Naive thymus-derived CD8-positive, alpha-beta T cell (primary cell): ENCODE measurements at regions of chr22 and their contacts with region 1.

Region 1: DNA sequence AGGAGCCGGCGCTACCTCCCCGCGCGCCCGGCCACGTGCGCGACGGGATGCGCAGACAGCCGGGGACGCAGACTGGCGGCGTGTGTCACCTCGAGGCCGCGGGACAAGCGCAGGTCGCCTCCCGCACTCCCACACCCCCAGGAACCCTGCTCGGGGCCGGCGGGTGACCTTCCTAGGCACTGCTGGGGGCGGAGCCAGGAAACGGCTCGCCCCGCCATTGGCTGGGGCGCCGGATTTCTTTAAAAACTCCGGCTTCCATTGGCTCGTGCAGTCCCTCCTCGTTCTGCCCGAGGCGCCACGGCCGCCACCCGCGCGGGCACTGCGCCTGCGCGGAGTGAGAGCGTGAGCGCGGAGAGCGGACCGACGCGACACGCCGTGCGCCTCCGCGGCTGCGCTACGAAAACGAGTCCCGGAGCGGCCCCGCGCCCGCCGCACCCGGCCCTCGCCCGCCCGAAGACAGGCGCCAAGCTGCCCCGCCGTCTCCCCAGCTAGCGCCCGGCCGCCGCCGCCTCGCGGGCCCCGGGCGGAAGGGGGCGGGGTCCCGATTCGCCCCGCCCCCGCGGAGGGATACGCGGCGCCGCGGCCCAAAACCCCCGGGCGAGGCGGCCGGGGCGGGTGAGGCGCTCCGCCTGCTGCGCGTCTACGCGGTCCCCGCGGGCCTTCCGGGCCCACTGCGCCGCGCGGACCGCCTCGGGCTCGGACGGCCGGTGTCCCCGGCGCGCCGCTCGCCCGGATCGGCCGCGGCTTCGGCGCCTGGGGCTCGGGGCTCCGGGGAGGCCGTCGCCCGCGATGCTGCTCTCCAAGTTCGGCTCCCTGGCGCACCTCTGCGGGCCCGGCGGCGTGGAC is at the start of gene PIM3:
- DNase-seq: peak; percentile 85 to 95 (median 90)
- ATAC-seq: peak; percentile 67 to 75
- H3K4me3 Mint-ChIP-seq: peak within 1 kb of the TSS; percentile 83 to 93 (median 90)
- H3K27ac Mint-ChIP-seq: peak within 1 kb of the TSS; percentile 77 to 98 (median 91)
- H3K4me1 Mint-ChIP-seq: peaks cover 16 to 41% (median 29%) of the 10 kb centered on the region in 4 donors
- H3K27me3 Mint-ChIP-seq: no peaks in the 10 kb centered on the region
- polyA plus RNA-seq, gene PIM3: 12.4 to 26.0 (median 13.6) TPM

Region 2: DNA sequence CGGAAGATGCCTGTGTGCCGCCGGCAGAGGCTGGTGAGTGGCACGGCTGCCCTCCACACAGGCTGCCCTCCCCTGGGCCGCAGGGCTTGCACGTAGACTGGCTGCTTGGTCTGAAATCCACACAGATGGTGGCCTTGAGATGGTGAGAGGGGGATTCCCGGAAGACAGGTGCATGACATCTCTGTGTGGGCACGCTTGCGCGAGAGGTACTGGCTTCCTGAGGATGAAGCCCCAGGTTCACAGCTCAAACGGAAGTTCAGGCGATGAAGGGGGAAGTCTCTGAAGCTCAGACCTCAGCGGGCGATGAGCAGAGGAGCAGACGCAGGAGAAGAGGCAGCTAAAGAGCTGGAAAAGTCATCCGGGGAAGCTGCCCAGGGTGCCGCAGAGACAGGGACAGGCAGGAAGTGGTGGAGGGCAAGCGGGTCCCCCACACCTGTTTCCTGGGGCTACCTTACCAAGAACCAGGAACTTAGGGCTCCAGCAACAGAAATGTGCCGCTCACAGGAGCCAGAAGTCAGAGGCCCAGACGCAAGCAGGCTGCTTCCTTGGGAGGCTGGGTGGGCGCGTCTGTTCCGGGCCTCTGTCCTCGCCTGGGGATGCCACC is 34.8 kb before region 1 on chr22:
- POLR2A ChIA-PET with region 1: interaction called, 14 read pairs
- DNase-seq: peak; percentile 57 to 87 (median 83)
- ATAC-seq: peak; percentile 89 to 92
- H3K4me3 Mint-ChIP-seq: peak overlapping the region; percentile 77 to 92 (median 86)
- H3K27ac Mint-ChIP-seq: peak overlapping the region; percentile 95 to 99 (median 98)
- H3K4me1 Mint-ChIP-seq: peaks cover 12 to 43% (median 33%) of the 10 kb centered on the region in 4 donors
- H3K27me3 Mint-ChIP-seq: no peaks in the 10 kb centered on the region

Region 3: DNA sequence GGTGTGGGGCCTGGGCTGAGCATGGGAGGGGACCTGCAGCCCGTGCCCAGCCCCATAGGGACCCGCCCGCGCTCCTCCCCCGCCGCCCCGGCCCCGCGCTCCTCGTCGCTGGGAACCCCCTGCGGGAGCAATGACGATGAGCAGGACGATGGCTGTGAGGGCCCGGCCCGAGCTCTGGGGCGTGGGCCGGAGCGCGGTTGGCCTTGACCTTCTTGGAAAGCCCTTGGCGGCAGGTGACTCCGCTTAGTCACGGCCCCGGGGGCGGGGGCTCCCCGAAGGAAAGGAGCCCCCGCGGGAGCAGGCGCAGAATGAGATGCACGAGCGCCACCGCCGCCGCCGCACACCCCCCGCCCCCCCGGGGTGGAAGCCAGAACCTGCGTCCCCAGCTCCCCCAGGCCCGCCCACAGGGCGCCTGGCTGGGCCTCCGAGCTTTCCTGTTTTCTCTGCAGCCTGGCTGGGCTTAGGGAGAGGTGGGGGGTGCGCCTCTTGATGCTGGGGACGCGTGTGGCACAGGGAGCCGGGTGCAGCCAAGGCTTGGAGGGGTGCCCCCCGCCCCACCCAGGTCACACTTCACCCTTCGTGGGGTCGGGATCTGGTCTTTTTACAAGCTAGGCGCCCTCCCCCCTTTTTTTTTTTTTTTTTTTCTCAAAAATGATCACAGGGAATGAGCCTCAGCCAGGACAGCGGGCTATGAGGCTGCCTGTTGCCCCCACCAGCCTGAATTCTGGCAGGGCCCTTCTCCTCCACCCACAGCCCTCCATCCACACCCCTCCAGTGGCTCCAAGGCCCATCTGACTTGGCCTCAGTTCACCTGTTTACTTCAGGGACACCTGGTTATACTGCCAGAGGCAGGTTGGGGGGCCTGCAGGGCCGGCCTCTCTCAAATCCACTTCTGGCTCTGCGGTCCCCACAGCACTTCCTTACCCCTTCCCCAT is 24.1 kb before region 1 on chr22:
- POLR2A ChIA-PET with region 1: interaction called, 74 read pairs
- DNase-seq: peak; percentile 81 to 93 (median 88)
- ATAC-seq: peak; percentile 79 to 83
- H3K4me3 Mint-ChIP-seq: peak overlapping the region; percentile 55 to 87 (median 72)
- H3K27ac Mint-ChIP-seq: peak overlapping the region; percentile 72 to 94 (median 86)
- H3K4me1 Mint-ChIP-seq: peaks cover 0 to 27% (median 22%) of the 10 kb centered on the region in 4 donors
- H3K27me3 Mint-ChIP-seq: no peaks in the 10 kb centered on the region

Region 4: DNA sequence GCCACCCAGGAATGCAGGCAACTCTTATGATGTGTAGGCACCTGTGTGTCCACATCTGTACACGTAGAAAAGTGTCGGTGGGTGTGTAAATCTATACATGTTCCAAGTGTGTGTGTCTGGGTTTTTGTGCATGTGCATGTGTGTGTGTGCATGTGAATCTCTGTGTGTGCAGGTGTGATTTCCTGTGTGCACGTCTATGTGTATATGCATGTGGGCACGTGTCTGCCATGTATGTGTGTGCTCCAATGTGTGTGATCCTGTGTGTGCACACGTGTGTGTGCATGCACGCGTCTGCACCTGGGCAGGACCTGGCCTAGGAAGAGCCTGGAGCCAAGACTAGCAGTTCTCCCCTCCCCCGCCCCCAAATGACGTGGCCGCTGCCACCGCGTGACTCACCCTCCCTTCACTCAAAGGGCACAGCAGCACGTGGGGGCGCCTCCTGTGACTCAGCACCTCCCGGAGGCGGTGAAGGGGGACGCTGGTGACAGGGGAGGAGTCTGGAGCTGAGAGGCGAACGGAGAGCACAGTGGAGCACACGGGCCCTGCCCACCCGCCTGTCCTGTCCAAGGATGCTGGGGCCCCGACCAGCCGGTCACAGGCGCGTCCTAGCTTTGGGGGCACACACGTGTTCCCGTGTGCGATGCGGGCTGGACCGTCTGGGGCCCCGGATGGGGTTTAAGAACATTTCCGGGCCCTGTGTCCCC is 10.3 kb after region 1 on chr22:
- POLR2A ChIA-PET with region 1: interaction called, 54 read pairs
- DNase-seq: peak; percentile 79 to 96 (median 87)
- ATAC-seq: peak; percentile 89
- H3K4me3 Mint-ChIP-seq: peak overlapping the region; percentile 79 to 90 (median 86)
- H3K27ac Mint-ChIP-seq: peak overlapping the region; percentile 84 to 97 (median 95)
- H3K4me1 Mint-ChIP-seq: peaks cover 10 to 34% (median 32%) of the 10 kb centered on the region in 4 donors
- H3K27me3 Mint-ChIP-seq: peaks cover 0 to 1% (median 0%) of the 10 kb centered on the region in 5 donors

Region 5: DNA sequence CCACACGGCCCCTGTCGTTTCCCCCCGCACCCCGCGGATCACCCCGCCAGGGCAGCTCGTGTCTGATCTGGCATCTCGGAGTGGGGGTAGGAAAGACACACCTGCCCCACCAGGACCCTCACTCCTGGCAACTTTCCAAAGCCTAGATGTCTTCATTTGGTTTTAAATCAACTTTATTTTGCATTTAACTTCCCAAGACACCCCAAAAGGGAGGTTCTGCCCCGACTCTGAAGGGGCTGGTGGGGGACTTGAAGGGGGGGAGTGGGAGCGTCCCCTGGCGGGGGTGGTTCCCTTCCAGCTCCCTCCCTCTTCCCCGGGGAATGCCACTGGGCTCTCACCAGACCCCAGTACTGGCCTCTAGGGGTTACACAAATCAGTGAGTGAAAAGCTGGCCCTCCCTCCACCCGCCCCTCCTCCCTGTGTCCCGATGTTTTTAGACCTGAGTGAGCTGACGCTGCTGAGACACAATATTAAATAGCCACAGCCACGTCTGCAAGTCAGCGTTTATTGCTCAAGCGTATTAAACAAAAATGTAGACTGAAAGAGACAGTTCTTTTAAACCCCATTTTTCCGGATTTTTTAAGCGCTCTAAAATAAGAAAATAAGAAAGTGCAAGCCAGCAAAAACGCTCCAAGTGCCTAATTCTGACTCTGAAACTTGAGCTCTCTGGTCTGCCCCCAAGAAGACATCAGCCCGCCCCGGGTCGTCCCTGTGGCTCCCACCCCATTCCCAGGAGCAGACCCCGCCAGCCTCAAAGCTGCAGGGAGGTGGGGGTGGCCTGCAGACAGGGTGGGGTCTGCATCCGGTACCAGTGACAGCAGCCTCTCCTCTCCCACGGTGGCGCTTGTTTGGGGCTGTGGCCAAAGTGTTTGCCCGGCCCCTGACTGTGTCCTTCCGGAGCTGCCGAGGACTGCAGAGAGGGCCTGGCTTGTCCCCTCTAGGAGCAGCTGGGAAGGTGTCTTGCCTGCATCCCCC is 98.8 kb after region 1 on chr22:
- POLR2A ChIA-PET with region 1: no interaction called
- DNase-seq: no peak
- ATAC-seq: no peak
- H3K4me3 Mint-ChIP-seq: peak overlapping the region in 4 of 10 donors; percentile 7 to 41 (median 21)
- H3K27ac Mint-ChIP-seq: no peak overlapping the region
- H3K4me1 Mint-ChIP-seq: peaks cover 0 to 1% (median 0%) of the 10 kb centered on the region in 4 donors
- H3K27me3 Mint-ChIP-seq: peaks cover 9 to 52% (median 12%) of the 10 kb centered on the region in 5 donors